Naive thymus-derived CD4-positive, alpha-beta T cell (primary cell): ENCODE measurements at regions of chr19 and their contacts with region 1.

Region 1: DNA sequence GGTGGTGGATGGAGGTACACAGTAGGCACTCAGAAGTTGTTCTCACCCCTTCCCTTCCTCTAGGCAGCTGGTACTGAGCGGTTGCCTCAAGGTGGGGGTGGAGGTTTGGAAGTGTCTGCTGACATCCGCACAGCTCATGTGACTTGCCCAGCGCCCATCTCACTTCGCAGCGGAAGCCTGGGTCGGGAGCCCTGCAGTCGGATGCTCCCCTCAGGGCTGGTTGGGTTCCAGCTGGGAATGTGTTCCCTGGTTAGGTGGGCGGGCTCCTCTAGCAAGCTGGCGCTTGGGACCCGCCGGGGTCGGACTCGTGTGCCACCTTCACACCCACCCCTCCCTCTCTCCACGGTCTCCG is 10.2 kb downstream of the PPP1R37 start:
- DNase-seq: peak in 8 of 9 donors; percentile 25 to 66 (median 50)
- ATAC-seq: peak; percentile 90
- H3K4me3 ChIP-seq: peak overlapping the region; percentile 58
- H3K4me3 Mint-ChIP-seq: peak overlapping the region; percentile 40 to 85 (median 72)
- H3K27ac ChIP-seq: peak overlapping the region; percentile 68
- H3K27ac Mint-ChIP-seq: peak overlapping the region in 7 of 9 donors; percentile 65 to 88 (median 72)
- H3K4me1 ChIP-seq: peaks cover 24 to 36% of the 10 kb centered on the region in 2 donors
- H3K4me1 Mint-ChIP-seq: peaks cover 35 to 81% (median 66%) of the 10 kb centered on the region in 7 donors
- H3K27me3 ChIP-seq: no peaks in the 10 kb centered on the region
- H3K27me3 Mint-ChIP-seq: no peaks in the 10 kb centered on the region

Region 2: DNA sequence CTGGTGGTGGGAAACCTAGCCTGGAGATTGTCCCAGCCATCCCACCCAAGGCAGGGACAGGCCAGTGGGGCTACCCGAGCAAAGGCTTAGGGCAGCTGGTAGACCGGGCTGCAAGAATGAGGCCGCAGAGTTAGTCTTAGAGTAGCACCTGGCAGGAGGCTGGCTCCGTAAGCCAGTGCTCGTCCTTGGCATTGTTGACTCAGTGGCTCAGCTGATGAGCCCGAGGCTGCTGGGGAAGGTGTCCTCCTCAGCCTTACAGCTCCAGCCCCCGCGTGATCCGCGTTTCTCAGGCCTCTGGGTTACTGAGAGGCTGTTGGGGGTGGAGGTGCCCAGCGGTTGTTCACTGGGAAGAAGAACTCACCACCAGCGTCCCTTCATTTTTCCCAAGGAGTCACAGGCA is 14.5 kb after region 1 on chr19:
- CTCF ChIA-PET with region 1: interaction called, 6 read pairs
- POLR2A ChIA-PET with region 1: interaction called, 3 read pairs
- intact Hi-C with region 1: loop called in 1 of 2 experiments (anchors 1 kb)
- DNase-seq: no peak
- ATAC-seq: no peak
- H3K4me3 ChIP-seq: no peak overlapping the region
- H3K4me3 Mint-ChIP-seq: peak overlapping the region in 9 of 10 donors; percentile 47 to 85 (median 80)
- H3K27ac ChIP-seq: no peak overlapping the region
- H3K27ac Mint-ChIP-seq: peak overlapping the region in 4 of 9 donors; percentile 43 to 88 (median 70)
- H3K4me1 ChIP-seq: peaks cover 9 to 42% of the 10 kb centered on the region in 2 donors
- H3K4me1 Mint-ChIP-seq: peaks cover 30 to 88% (median 63%) of the 10 kb centered on the region in 7 donors
- H3K27me3 ChIP-seq: no peaks in the 10 kb centered on the region
- H3K27me3 Mint-ChIP-seq: no peaks in the 10 kb centered on the region

Region 3: GRCh38 chr19:45125926-45126493 is 22.9 kb after region 1 on chr19:
- CTCF ChIA-PET with region 1: interaction called, 17 read pairs
- POLR2A ChIA-PET with region 1: no interaction called
- intact Hi-C with region 1: loop called in 1 of 2 experiments (anchors 1 kb)
- DNase-seq: peak; percentile 37 to 74 (median 58)
- ATAC-seq: peak; percentile 93
- H3K4me3 ChIP-seq: no peak overlapping the region
- H3K4me3 Mint-ChIP-seq: no peak overlapping the region
- H3K27ac ChIP-seq: no peak overlapping the region
- H3K27ac Mint-ChIP-seq: no peak overlapping the region
- H3K4me1 ChIP-seq: peaks cover 4 to 10% of the 10 kb centered on the region in 2 donors
- H3K4me1 Mint-ChIP-seq: peaks cover 13 to 40% (median 27%) of the 10 kb centered on the region in 7 donors
- H3K27me3 ChIP-seq: no peaks in the 10 kb centered on the region
- H3K27me3 Mint-ChIP-seq: no peaks in the 10 kb centered on the region